ENCODE measurements at regions of chr13 and their contacts with region 1.

Region 1: DNA sequence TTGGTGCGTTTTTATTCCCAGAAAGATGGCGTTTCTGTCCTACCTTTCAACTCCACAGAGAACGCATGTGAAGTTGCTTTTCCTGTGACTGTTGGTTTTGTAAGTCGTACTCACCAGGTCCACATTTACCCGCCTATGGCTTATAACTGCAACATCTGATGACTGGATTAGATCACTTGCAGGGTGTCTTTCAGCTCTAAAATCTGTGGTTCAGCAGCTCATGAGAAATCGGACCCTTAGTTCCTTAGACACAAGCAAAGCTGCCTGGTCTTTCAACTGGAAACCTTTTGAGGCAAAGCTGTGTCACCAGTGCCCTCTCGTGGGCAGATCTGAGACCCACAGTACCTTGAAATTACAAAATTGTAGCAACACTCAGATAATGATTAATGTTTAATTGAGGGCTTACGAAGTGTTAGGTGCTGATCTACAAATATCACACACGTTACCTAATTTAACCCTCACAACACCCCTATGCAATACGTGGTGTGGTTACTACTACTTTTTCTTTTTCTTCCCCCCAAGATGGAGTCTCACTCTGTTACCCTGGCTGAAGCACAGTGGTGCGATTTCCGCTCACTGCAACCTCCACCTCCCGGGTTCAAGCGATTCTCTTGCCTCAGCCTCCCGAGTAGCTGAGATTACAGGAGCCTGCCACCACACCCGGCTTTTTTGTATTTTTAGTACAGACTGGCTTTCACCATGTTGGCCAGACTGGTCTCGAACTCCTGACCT is 65.4 kb downstream of the RUBCNL start:
- DNase-seq: peak; percentile 89
- H3K4me3 Mint-ChIP-seq: peak overlapping the region; percentile 81
- H3K27ac Mint-ChIP-seq: peak overlapping the region; percentile 93
- H3K4me1 Mint-ChIP-seq: peaks cover 36% of the 10 kb centered on the region
- H3K27me3 Mint-ChIP-seq: no peaks in the 10 kb centered on the region

Region 2: GRCh38 chr13:45807520-45808099 is 514.0 kb before region 1 on chr13:
- CTCF ChIA-PET with region 1: interaction called, 8 read pairs
- intact Hi-C with region 1: loop called (anchors 1 kb)
- DNase-seq: peak; percentile 55
- H3K4me3 Mint-ChIP-seq: no peak overlapping the region
- H3K27ac Mint-ChIP-seq: no peak overlapping the region
- H3K4me1 Mint-ChIP-seq: no peaks in the 10 kb centered on the region
- H3K27me3 Mint-ChIP-seq: no peaks in the 10 kb centered on the region

Region 3: DNA sequence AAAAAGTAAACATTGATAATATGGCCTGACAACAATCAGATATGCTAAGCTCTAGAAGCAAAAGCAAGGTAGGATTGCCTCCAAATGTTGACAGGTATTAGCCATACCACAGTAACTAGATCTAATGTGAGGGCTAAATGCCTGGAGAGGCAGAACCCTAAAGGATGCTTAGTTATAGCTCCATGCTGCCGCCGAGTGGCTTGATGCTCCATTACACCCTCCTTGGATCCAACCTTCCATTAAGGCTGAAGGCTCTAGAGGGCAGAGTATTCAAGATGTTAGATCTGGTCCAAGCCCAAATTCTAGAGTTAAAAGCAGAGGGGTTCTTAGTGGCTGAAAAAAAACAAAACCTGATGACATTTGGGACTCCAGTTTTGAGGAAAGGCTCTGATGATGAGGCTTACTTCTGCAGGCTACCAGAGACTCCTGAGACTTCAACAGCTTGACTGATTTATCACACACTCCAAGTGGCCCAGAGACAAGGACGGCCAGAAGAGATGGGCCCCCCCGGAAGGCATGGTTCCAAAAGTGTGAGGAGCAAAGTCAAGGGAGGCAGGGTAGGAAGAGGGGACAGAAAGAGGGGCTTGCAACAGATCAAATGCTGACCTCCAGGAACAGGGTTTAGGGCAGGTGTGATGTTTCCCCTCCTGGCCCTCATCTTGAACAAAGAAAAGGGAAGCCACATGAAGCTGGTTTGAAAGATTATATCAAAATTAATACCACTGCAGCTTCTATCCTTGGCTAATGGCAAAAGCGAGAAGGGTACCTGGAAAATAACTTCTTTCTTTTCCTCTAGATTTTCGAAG is 194.9 kb before region 1 on chr13:
- CTCF ChIA-PET with region 1: interaction called, 11 read pairs
- intact Hi-C with region 1: loop called (anchors 1 kb)
- DNase-seq: peak; percentile 91
- H3K4me3 Mint-ChIP-seq: no peak overlapping the region
- H3K27ac Mint-ChIP-seq: peak overlapping the region; percentile 76
- H3K4me1 Mint-ChIP-seq: peaks cover 38% of the 10 kb centered on the region
- H3K27me3 Mint-ChIP-seq: no peaks in the 10 kb centered on the region

Region 4: GRCh38 chr13:46211483-46212351 is 109.9 kb before region 1 on chr13 and contains the start of gene LRRC63:
- CTCF ChIA-PET with region 1: no interaction called
- intact Hi-C with region 1: loop called (anchors 2 kb)
- DNase-seq: peak; percentile 83
- H3K4me3 Mint-ChIP-seq: peak within 1 kb of the TSS; percentile 91
- H3K27ac Mint-ChIP-seq: peak within 1 kb of the TSS; percentile 91
- H3K4me1 Mint-ChIP-seq: peaks cover 14% of the 10 kb centered on the region
- H3K27me3 Mint-ChIP-seq: no peaks in the 10 kb centered on the region
- total RNA-seq, gene LRRC63: 0.24 to 0.32 TPM

Region 5: GRCh38 chr13:46341112-46341711 is 19.6 kb after region 1 on chr13:
- CTCF ChIA-PET with region 1: interaction called, 5 read pairs
- intact Hi-C with region 1: loop called (anchors 1 kb)
- DNase-seq: peak; percentile 78
- H3K4me3 Mint-ChIP-seq: peak overlapping the region; percentile 63
- H3K27ac Mint-ChIP-seq: peak overlapping the region; percentile 92
- H3K4me1 Mint-ChIP-seq: peaks cover 52% of the 10 kb centered on the region
- H3K27me3 Mint-ChIP-seq: no peaks in the 10 kb centered on the region

Region 6: GRCh38 chr13:46468570-46469463 is 147.2 kb after region 1 on chr13:
- CTCF ChIA-PET with region 1: no interaction called
- intact Hi-C with region 1: no loop called
- DNase-seq: no peak
- H3K4me3 Mint-ChIP-seq: no peak overlapping the region
- H3K27ac Mint-ChIP-seq: no peak overlapping the region
- H3K4me1 Mint-ChIP-seq: no peaks in the 10 kb centered on the region
- H3K27me3 Mint-ChIP-seq: no peaks in the 10 kb centered on the region

Region 7: GRCh38 chr13:46495651-46496050 is 174.0 kb after region 1 on chr13:
- CTCF ChIA-PET with region 1: no interaction called
- intact Hi-C with region 1: no loop called
- DNase-seq: no peak
- H3K4me3 Mint-ChIP-seq: no peak overlapping the region
- H3K27ac Mint-ChIP-seq: no peak overlapping the region
- H3K4me1 Mint-ChIP-seq: no peaks in the 10 kb centered on the region
- H3K27me3 Mint-ChIP-seq: no peaks in the 10 kb centered on the region